Breast epithelium (tissue), 4 donors: ENCODE measurements at regions of chr4 and their contacts with region 1.

Region 1: DNA sequence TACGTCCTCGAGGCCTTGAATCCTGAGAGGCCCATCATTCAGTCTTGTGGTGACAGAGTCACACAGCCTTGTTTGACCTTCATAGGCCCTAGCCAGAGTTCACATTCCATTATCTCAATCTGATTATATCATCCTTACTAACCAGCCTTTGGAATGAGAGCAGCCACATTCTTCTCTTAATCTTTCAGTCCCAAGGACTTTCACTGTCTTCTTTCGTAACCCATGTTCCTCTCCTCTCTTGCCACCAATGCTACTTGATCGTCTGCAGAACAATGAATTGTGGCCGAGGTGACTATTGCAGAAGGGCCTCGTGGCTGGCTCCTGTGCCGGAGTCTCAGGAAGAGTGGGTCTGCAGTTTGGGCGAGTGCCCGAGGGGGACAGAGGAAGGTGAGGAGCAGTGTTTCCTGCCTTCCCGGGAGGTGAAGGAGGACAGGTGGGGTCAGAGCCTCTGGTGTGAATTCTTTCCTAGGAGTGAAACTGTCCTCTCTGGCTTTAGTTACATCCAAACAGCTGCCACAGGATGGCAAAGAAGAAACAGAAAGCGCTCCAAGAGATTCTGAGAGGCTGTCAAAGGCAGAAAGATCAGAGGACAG is 94.6 kb downstream of the LIMCH1 start:
- DNase-seq: no peak
- H3K4me3 ChIP-seq: no peak overlapping the region
- H3K27ac ChIP-seq: no peak overlapping the region
- H3K4me1 ChIP-seq: no peaks in the 10 kb centered on the region
- H3K27me3 ChIP-seq: no peaks in the 10 kb centered on the region
- CTCF ChIP-seq: no peak
- POLR2A ChIP-seq: no peak

Region 2: DNA sequence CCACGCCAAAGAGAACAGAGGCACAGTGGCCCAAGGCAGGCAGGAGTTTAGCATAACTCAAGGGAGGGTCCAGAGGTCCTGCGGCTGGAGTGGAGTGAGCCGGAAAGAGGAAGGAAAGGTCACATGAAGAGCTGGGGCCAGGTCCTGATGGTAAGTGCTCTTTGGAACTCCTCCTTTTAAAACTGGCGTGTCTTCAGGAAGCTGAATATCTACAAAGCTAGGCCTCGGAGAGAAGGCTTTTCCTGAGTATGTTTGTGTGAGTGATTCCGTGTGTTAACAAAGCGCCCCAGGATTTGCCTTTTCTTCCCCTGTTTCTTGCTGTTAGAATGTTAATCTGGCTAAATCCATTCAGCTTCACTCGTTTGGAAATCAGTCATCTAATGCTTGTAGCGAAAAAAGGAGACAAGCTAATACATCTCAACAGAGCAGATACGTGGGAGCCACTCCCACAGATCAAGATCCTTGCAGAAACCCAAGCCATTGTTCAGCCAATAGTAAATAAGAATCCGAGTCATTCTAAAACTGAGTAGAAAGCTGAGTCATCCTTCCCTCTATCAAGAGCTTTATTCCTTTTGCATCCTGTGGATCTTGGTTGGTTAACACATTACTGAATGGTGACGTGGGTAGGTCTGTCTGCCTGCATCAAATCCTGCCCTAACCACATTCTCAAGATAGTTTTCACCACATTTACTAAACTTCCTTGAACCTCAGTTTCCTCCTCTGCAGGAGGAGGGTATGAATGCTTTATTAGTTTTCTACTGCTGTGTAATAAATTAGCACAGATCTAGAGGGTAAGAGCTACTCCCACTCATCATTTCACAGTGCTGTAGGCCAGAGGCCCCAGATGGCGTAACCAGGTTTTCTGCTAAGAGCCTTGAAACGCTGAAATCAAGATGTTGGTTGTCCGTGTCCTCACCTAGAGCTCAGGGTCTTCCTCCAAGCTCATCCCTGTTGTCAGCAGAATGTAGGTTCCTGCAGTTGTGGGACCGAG is 959.7 kb before region 1 on chr4:
- intact Hi-C with region 1: loop called (anchors 10 kb)
- DNase-seq: no peak
- H3K4me3 ChIP-seq: no peak overlapping the region
- H3K27ac ChIP-seq: peak overlapping the region in 1 of 2 donors; percentile 52
- H3K4me1 ChIP-seq: no peaks in the 10 kb centered on the region
- H3K27me3 ChIP-seq: no peaks in the 10 kb centered on the region
- CTCF ChIP-seq: no peak
- POLR2A ChIP-seq: no peak